PC-3 (cell line): ENCODE measurements at regions of chr6 and their contacts with region 1.

Region 1: DNA sequence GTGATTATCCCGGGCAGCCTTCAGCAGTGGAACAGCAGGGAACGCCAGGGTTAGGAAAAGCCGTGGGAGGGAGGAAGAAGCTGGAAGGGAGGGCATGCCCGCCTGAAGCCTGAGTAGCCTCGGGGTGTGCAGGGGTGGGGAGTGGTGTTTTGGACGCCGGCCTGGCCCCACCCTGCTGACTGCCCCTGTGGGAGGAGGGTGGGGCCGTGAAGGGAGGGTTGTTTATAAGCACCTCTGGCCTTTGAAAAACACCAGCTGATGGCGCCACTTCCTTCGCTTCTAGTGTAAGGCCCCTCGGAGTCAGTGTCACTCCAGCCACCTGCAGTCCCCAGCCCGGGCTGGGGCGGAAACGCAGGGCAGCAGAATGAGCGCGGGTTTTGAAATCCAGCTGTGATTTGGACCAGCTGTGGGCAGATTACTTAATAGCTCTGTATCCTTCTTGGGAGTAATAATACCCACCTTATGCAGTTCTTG is 52.8 kb upstream of the BMP6 start:
- DNase-seq: peak; percentile 87
- ATAC-seq: peak; percentile 79
- H3K4me3 ChIP-seq: no peak overlapping the region
- H3K27ac ChIP-seq: peak overlapping the region; percentile 62
- H3K4me1 ChIP-seq: peaks cover 34% of the 10 kb centered on the region
- H3K27me3 ChIP-seq: no peaks in the 10 kb centered on the region
- CTCF ChIP-seq: peak; percentile 55

Region 2: GRCh38 chr6:7742223-7742785 is 69.2 kb after region 1 on chr6:
- CTCF ChIA-PET with region 1: no interaction called
- POLR2A ChIA-PET with region 1: no interaction called
- intact Hi-C with region 1: no loop called
- DNase-seq: no peak
- ATAC-seq: no peak
- H3K4me3 ChIP-seq: no peak overlapping the region
- H3K27ac ChIP-seq: no peak overlapping the region
- H3K4me1 ChIP-seq: no peaks in the 10 kb centered on the region
- H3K27me3 ChIP-seq: peaks cover 17% of the 10 kb centered on the region; the same call in 1 of the 2 replicates
- CTCF ChIP-seq: no peak

Region 3: GRCh38 chr6:8006208-8006607 is 333.1 kb after region 1 on chr6:
- CTCF ChIA-PET with region 1: interaction called, 3 read pairs
- POLR2A ChIA-PET with region 1: no interaction called
- intact Hi-C with region 1: loop called (anchors 5 kb)
- DNase-seq: peak; percentile 55
- ATAC-seq: peak; percentile 54
- H3K4me3 ChIP-seq: no peak overlapping the region
- H3K27ac ChIP-seq: no peak overlapping the region
- H3K4me1 ChIP-seq: no peaks in the 10 kb centered on the region
- H3K27me3 ChIP-seq: no peaks in the 10 kb centered on the region
- CTCF ChIP-seq: peak; percentile 72